A549 (cell line): ENCODE measurements at regions of chr21 and their contacts with region 1.

Region 1: GRCh38 chr21:42145569-42146272 is 73.2 kb upstream of the ABCG1 start:
- DNase-seq: peak; percentile 44 to 69
- ATAC-seq: peak; percentile 86 to 90
- H3K4me3 ChIP-seq: no peak overlapping the region
- H3K27ac ChIP-seq: no peak overlapping the region
- H3K4me1 ChIP-seq: no peaks in the 10 kb centered on the region
- CTCF ChIP-seq: peak; percentile 65
- EP300 ChIP-seq: no peak
- POLR2A ChIP-seq: no peak
- RAD21 ChIP-seq: peak; percentile 79 to 84

Region 2: DNA sequence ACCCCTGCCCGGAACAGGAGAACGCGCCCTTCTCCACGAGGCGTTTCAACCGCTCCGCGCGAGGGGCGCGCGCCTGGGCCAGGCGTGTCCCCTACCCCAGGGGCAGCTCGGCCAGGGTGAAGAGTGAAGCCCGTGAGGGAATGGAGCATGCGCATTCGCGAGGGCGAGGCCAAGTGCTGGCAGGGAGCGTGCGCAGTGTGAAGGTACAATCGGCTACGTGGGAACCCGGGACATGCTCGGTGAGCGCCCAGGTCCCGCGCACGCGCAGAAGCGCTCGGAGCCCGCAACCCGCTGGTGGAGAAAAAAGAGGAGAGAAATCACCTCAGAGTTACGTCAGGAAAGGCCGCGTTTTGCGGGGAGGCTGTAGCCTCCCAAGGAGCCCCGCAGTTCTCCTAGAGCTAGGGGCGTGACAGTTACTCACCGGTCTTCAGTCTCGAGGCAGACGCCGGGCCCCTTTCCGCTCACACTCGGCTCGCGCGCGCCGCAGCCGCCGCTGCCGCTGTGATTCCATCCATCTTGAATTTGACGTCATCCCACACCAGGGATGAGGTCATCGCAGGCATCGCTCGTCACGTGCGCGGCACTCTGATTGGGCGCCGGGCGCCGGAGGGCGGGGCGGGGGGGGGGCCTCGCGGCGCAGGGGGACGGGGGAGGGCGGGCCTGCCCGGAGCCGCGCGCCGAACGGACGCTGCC is 135.7 kb before region 1 on chr21 and contains the start of gene ZBTB21:
- CTCF ChIA-PET with region 1: no interaction called
- POLR2A ChIA-PET with region 1: no interaction called
- DNase-seq: peak; percentile 79 to 96
- ATAC-seq: peak; percentile 87 to 93
- H3K4me3 ChIP-seq: peak within 1 kb of the TSS; percentile 93
- H3K27ac ChIP-seq: peak within 1 kb of the TSS; percentile 97 to 98
- H3K4me1 ChIP-seq: peaks cover 9% of the 10 kb centered on the region; the same call in 2 of the 3 replicates
- CTCF ChIP-seq: no peak
- EP300 ChIP-seq: no peak
- POLR2A ChIP-seq: peak; percentile 81
- RAD21 ChIP-seq: no peak
- polyA plus RNA-seq, gene ZBTB21: 12.4 and 13.1 TPM in 2 replicates

Region 3: GRCh38 chr21:42135386-42136052 is 10.2 kb before region 1 on chr21:
- CTCF ChIA-PET with region 1: interaction called, 35 read pairs
- POLR2A ChIA-PET with region 1: no interaction called
- DNase-seq: no peak
- ATAC-seq: no peak; a peak in 1 of 6 replicates
- H3K4me3 ChIP-seq: no peak overlapping the region
- H3K27ac ChIP-seq: no peak overlapping the region
- H3K4me1 ChIP-seq: no peaks in the 10 kb centered on the region
- CTCF ChIP-seq: no peak
- EP300 ChIP-seq: no peak
- POLR2A ChIP-seq: no peak
- RAD21 ChIP-seq: no peak

Region 4: DNA sequence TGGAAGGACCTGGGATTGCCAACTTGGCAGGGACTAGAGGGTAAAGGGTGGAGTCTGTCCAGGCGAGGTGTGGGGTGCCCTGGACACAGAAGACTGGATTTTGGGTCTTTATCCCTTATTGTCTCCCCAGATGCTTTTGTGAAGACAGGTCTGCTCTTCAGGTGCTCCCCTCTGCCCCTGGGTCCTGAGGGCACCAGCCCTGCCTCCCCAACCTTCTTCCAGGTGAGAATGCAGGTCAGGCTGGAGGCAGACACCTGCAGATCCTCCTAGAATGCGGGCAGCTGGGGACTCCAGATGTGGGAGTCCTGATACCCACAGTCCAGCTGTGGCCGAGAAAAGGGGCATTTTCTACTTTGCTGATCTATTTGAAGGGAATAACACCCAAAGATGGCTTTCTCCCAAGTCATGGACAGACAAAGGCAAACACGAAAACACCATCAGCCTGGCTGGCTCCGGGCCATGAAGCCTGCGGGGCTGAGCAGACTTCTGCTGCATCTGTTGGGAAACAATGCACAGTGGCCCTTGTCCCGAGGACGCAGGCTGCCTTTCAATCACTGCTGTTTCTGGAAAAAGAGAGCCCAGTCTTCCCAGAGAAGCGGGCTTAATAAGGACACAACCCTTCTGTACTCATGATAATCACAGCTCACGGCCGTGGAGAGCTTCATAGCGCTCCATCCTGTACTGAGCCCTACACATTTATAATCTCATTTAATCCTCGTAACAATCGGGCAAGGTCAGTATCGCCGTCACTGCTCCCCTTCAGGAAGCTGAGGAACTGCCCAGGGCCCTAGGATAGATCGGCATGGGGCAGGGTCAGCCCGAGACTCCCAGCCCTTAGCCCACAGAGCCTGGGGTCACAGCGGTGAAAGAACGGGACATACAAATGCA is 11.2 kb after region 1 on chr21:
- CTCF ChIA-PET with region 1: interaction called, 29 read pairs
- POLR2A ChIA-PET with region 1: no interaction called
- DNase-seq: no peak
- ATAC-seq: no peak
- H3K4me3 ChIP-seq: no peak overlapping the region
- H3K27ac ChIP-seq: no peak overlapping the region
- H3K4me1 ChIP-seq: no peaks in the 10 kb centered on the region
- CTCF ChIP-seq: no peak
- EP300 ChIP-seq: no peak
- POLR2A ChIP-seq: no peak
- RAD21 ChIP-seq: no peak

Region 5: GRCh38 chr21:42250422-42251403 is 105.0 kb after region 1 on chr21:
- CTCF ChIA-PET with region 1: interaction called, 11 read pairs
- POLR2A ChIA-PET with region 1: no interaction called
- DNase-seq: no peak
- ATAC-seq: no peak; a peak in 2 of 6 replicates
- H3K4me3 ChIP-seq: no peak overlapping the region
- H3K27ac ChIP-seq: no peak overlapping the region
- H3K4me1 ChIP-seq: no peaks in the 10 kb centered on the region
- CTCF ChIP-seq: no peak
- EP300 ChIP-seq: no peak
- POLR2A ChIP-seq: no peak
- RAD21 ChIP-seq: no peak

Region 6: DNA sequence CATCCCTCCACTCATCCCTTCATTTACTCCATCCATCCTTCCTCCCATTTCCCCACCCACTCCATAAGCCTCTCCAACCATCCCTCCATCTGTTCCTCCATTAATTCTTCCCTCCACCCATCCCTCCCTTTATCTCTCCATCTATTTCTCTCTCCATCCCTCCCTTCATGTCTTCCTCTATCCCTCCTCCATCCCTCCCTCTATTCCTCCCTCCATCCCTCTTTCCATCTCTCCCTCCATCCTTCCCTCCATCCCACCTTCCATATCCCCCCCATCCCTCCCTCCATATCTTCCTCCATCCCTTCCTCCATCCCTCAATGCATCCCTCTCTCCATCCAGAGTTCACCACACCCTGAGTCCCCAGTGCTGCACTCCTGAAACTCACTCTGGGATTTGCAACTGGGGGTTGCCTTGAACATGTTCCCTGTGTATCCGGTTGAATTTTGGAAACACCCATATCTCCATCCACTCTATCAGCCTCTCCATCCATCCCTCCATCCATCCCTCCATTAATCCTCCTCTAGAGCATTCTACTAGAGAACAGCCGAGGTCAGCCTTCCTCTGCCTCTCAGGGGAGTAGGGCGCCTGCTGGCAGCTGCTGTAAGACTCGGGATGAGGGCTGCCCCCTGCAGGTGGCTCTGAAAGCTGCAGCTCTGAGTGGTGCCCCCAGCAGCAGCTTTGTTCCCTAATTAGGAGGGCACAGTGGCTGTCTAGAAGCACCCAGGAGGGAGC is 112.6 kb after region 1 on chr21:
- CTCF ChIA-PET with region 1: interaction called, 23 read pairs
- POLR2A ChIA-PET with region 1: no interaction called
- DNase-seq: peak; percentile 38 to 60
- ATAC-seq: peak; percentile 83 to 93; a peak in 5 of 6 replicates
- H3K4me3 ChIP-seq: no peak overlapping the region
- H3K27ac ChIP-seq: no peak overlapping the region
- H3K4me1 ChIP-seq: peaks cover 7% of the 10 kb centered on the region; the same call in 1 of the 3 replicates
- CTCF ChIP-seq: peak; percentile 54
- EP300 ChIP-seq: no peak
- POLR2A ChIP-seq: no peak
- RAD21 ChIP-seq: peak; percentile 52 to 58

Region 7: GRCh38 chr21:42309753-42310221 is 164.1 kb after region 1 on chr21:
- CTCF ChIA-PET with region 1: interaction called, 10 read pairs
- POLR2A ChIA-PET with region 1: no interaction called
- DNase-seq: peak; percentile 11 to 33
- ATAC-seq: peak; percentile 48 to 85; a peak in 4 of 6 replicates
- H3K4me3 ChIP-seq: no peak overlapping the region
- H3K27ac ChIP-seq: no peak overlapping the region
- H3K4me1 ChIP-seq: no peaks in the 10 kb centered on the region
- CTCF ChIP-seq: peak; percentile 52
- EP300 ChIP-seq: no peak
- POLR2A ChIP-seq: no peak
- RAD21 ChIP-seq: peak; percentile 62 to 65

Region 8: DNA sequence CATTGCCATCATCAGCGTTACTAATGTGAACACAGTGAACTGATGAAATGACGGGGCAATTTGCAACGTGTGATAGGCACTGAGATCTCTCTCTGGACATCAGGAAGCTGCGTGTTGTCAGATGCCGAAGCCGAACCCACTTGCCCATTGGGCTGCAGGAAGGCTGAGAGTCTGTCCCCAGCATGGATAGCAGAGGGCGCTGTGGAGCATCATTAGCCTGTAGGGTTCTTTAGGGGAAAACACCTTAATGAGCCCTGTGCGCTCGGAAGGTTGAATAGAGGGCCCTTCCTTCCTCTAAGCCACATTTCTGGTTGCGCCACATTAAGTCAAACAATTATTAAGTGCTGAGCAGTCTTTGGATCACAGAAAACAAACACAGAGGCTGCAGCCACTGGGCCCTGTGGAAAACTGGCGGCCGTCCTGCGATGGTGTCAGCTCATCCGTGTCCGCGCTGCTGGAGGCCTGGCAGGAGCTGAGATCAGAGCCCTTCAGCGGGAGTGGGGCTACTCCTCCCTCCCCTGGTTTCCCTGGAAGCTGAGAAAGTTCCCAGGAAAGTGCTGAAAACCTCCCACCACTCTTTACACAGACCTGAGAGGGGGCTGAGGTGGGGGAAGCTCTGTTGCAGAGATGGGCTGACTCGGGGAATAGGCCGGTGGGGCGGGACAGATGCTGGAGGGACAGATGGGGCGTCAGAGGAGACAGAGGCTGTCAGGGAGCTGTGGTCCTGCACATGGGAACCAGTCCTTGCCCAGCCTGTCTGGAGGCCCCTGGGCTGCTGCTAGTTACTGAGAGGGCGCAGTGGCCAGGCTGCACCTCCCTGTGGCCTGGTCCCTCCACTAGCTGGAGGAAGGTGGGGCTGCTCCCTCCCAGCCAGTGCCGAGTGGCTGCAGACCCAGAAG is 192.4 kb after region 1 on chr21:
- CTCF ChIA-PET with region 1: interaction called, 13 read pairs
- POLR2A ChIA-PET with region 1: no interaction called
- DNase-seq: peak; percentile 5 to 65
- ATAC-seq: peak; percentile 70 to 88; a peak in 5 of 6 replicates
- H3K4me3 ChIP-seq: no peak overlapping the region
- H3K27ac ChIP-seq: no peak overlapping the region
- H3K4me1 ChIP-seq: no peaks in the 10 kb centered on the region
- CTCF ChIP-seq: peak; percentile 43
- EP300 ChIP-seq: no peak
- POLR2A ChIP-seq: no peak
- RAD21 ChIP-seq: peak; percentile 38 to 43; a peak in 4 of 5 replicates

Region 9: DNA sequence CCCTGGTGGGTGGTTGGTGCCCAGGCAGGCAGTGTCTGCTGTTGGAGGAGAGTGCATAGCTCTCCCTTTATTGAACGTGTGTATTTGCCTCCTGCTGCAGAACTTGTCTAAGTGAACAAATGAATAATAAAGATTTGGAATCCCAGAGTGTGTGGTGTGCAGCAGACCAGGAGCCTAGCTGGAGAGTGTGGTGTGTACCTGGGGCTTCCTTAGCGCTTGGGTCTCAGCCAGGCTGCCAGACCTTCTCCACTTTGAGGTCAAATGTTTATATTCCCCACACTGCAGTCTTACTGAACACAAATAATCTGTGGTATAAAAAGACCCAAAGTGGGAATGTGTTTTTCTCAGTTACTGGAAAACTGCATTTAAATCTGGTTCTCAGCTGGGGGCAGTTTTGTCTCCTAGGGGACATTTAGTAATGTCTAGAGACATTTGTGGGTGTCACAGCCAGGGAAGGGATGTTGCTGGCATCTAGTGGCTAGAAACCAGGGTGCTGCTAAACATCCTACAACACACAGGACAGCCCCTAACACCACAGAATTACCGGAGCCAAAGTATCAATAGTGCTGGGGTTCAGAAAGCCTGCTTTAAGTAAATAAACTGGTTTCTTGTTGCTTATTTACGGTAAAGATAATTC is 391.5 kb after region 1 on chr21:
- CTCF ChIA-PET with region 1: no interaction called
- POLR2A ChIA-PET with region 1: no interaction called
- DNase-seq: peak in 1 of 2 experiments; percentile 6
- ATAC-seq: 0 out of 6 replicates have a peak, but pooled peaks of 1 of the 2 experiments have one; percentile 54
- H3K4me3 ChIP-seq: no peak overlapping the region
- H3K27ac ChIP-seq: no peak overlapping the region
- H3K4me1 ChIP-seq: no peaks in the 10 kb centered on the region
- CTCF ChIP-seq: peak; percentile 29; the same call in 2 of the 3 replicates
- EP300 ChIP-seq: no peak
- POLR2A ChIP-seq: no peak
- RAD21 ChIP-seq: peak; percentile 35 to 45; a peak in 4 of 5 replicates